Left ventricle myocardium inferior (tissue), 1 donor: ENCODE measurements at regions of chr17 and their contacts with region 1.

Region 1: GRCh38 chr17:38922538-38923297 is 2.7 kb upstream of the LASP1NB start:
- DNase-seq: no peak
- H3K4me3 ChIP-seq: no peak overlapping the region
- H3K27ac ChIP-seq: peak overlapping the region; percentile 82
- H3K4me1 ChIP-seq: peaks cover 58% of the 10 kb centered on the region
- H3K27me3 ChIP-seq: no peaks in the 10 kb centered on the region
- CTCF ChIP-seq: peak; percentile 14

Region 2: DNA sequence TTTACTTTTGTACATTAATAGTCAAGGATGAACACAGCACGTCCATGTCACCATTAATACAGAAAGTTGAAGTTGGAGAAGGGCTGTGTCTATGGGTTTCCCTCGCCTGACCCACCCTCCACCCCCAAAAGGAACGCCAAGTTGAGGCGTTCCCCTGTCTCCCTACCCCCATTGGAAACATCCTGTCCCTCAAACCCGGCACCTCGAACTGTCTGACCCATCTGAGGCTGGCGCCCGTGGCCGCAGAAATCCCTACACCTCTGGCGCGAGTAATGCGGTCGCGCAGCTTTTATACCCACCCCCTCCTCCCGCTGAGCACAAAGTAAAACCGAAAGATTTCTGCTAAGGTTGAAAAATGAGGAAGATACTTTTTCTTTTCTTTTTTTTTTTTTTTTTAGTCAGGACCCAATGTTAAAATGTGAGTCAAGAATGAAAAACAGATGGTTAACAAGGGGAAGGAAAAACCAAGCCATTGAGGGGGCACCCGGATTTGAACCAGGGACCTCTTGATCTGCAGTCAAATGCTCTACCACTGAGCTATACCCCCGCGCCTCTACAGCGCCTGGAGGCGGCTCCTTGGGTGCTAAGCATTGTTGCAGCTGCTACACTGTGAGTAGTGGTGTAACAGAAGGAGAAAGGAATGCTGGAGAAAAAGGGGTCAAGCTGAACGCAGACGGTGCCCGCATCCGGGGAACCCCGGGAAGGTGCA is 53.7 kb before region 1 on chr17:
- intact Hi-C with region 1: loop called (anchors 10 kb)
- DNase-seq: peak; percentile 85
- H3K4me3 ChIP-seq: peak overlapping the region; percentile 99
- H3K27ac ChIP-seq: peak overlapping the region; percentile 97
- H3K4me1 ChIP-seq: peaks cover 56% of the 10 kb centered on the region
- H3K27me3 ChIP-seq: no peaks in the 10 kb centered on the region
- CTCF ChIP-seq: peak; percentile 41

Region 3: GRCh38 chr17:39018267-39019134 is 95.8 kb after region 1 on chr17:
- intact Hi-C with region 1: no loop called
- DNase-seq: no peak
- H3K4me3 ChIP-seq: no peak overlapping the region
- H3K27ac ChIP-seq: peak overlapping the region; percentile 21
- H3K4me1 ChIP-seq: peaks cover 21% of the 10 kb centered on the region
- H3K27me3 ChIP-seq: no peaks in the 10 kb centered on the region
- CTCF ChIP-seq: no peak